ENCODE measurements at regions of chr4 and their contacts with region 1.

Region 1: DNA sequence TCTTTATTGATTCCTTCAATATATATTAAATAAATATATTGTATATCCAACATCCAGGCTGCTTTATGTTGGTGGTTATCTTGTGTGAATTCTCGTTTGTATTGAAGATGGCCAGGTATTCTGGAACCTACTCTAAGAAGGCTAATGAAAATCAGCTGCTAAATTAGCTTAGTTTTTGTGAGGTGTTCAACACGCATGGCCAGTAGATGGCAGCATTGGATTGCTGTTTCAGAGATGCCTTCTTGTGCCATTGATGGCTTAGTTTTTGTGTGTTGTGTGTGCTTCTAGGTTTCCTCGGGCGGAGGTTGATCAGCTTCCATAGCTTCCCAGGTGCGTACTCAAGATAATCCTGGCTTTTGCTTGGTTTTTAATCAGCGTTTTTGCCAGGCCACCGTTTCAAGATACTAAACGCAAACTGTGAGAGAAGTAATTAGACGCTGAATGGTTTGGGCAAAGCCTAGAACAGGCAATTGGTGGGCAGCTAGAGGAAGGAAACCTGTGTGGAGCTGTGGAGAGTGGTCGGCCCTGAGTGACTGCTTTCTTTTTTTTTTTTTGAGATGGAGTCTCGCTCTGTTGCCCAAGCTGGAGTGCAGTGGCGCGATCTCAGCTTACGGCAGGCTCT is 15.1 kb downstream of the NOCT start:
- DNase-seq: peak; percentile 80
- H3K4me3 Mint-ChIP-seq: no peak overlapping the region
- H3K27ac Mint-ChIP-seq: no peak overlapping the region
- H3K4me1 Mint-ChIP-seq: peaks cover 5% of the 10 kb centered on the region
- H3K27me3 Mint-ChIP-seq: no peaks in the 10 kb centered on the region

Region 2: DNA sequence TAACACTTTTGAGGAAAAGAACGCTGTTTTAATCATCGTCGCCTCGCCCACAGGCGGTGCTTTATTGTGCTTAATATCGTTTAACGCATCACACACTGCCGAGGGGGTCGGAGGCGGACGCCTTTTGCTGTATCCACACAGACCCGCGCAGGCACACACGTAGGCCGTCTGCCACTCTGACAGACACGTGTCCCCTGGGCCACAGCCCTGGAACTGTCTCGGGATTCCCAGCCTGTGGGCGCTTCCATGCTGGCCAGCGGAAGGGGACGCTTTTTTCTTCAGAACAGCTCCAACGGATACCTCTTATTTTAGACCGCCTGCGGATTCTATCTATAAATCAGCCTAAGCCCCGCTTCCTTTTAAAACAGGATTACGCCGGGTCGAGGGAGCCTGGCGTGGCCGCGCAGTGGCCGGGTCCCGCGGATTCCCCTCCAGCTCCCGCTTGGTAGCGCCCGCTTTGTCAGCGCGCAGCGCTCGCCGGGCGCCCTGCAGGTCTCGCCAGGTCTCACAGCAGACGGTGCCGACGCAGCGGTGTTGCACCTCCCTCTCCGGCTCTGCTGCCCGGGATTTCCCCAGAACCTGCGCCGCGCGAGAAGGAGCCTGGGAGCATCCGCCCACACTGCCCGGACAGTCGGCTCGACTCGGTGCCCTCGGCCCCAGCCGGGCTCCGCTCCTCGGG is 15.3 kb before region 1 on chr4 and contains the start of gene NOCT:
- CTCF ChIA-PET with region 1: interaction called, 37 read pairs
- POLR2A ChIA-PET with region 1: interaction called, 7 read pairs
- DNase-seq: peak; percentile 91
- H3K4me3 Mint-ChIP-seq: peak within 1 kb of the TSS; percentile 87
- H3K27ac Mint-ChIP-seq: peak within 1 kb of the TSS; percentile 87
- H3K4me1 Mint-ChIP-seq: peaks cover 33% of the 10 kb centered on the region
- H3K27me3 Mint-ChIP-seq: no peaks in the 10 kb centered on the region
- total RNA-seq, gene NOCT: 4.5 to 5.4 TPM

Region 3: GRCh38 chr4:139042981-139043460 is 12.3 kb after region 1 on chr4:
- CTCF ChIA-PET with region 1: interaction called, 23 read pairs
- POLR2A ChIA-PET with region 1: interaction called, 3 read pairs
- DNase-seq: no peak
- H3K4me3 Mint-ChIP-seq: no peak overlapping the region
- H3K27ac Mint-ChIP-seq: no peak overlapping the region
- H3K4me1 Mint-ChIP-seq: peaks cover 5% of the 10 kb centered on the region
- H3K27me3 Mint-ChIP-seq: no peaks in the 10 kb centered on the region

Region 4: GRCh38 chr4:139050446-139050845 is 19.7 kb after region 1 on chr4:
- CTCF ChIA-PET with region 1: interaction called, 13 read pairs
- POLR2A ChIA-PET with region 1: no interaction called
- DNase-seq: no peak
- H3K4me3 Mint-ChIP-seq: no peak overlapping the region
- H3K27ac Mint-ChIP-seq: no peak overlapping the region
- H3K4me1 Mint-ChIP-seq: peaks cover 3% of the 10 kb centered on the region
- H3K27me3 Mint-ChIP-seq: no peaks in the 10 kb centered on the region

Region 5: DNA sequence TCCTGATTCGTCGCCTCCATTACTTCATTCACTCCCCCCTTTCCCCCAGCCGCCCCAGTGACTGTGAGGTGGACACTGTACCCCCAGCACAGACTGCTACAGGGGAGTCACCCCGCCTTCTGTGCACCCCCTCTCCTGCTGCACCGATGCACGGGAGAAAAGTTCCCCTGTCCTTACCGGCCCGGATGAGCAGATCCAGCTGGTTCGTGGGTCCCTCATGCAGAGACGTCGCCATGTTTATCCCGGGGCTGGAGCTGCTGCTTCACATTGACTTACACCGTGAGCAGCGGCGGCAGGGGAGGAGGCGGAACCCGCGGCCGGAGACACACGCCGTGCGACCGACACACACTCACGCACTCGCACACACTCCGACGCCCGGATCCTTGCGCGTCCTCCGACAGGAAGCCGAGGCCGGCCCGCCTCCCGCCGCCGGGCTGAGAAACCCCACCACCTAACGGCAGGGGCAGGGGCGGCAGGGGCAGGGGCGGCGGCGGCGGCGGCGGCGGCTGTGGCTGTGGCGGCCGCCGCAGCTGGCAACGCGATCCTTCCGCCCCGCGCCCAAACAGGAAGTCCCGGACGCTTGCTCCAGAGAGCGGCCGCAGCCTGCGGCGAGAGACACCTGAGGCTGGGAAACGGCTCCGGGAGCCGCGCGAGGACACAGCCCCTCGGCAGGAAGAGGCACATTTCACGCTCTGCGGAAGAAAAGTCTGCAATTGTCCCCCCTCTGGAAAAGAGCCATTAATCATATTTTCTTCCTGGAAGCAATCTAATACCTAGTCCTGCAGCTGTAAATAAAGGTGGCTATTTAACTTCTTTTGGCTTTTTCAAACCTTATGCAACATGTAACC is 53.5 kb after region 1 on chr4:
- CTCF ChIA-PET with region 1: interaction called, 65 read pairs
- POLR2A ChIA-PET with region 1: interaction called, 9 read pairs
- DNase-seq: peak; percentile 86
- H3K4me3 Mint-ChIP-seq: peak overlapping the region; percentile 80
- H3K27ac Mint-ChIP-seq: peak overlapping the region; percentile 98
- H3K4me1 Mint-ChIP-seq: peaks cover 39% of the 10 kb centered on the region
- H3K27me3 Mint-ChIP-seq: no peaks in the 10 kb centered on the region

Region 6: DNA sequence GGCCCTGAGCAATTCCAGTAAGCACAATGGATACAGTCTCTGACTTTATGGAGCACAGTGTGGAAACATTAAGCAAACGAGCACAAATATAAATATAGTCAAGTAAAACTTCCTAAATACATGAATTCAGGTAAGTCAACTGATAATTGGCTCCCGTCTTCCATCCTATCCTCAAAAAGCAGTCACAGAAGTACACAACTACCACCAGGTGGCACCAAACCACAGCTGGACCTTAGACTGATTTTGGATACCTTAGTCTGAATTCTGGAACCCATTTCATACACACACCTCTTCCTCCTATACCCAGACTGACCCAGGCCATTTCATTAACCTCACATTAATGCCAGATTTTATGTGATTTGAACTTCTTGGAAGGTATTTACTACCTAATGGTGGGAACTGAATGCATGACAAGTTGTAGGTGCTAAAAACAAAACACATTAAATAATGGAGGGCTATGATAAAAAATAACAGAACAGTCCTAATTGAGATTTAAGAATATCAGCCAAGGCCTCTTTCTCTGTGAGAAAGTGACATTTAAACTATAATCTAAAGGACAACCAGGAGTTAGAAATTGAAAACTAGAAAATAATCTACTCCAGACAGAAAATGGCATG is 68.7 kb after region 1 on chr4:
- CTCF ChIA-PET with region 1: interaction called, 21 read pairs
- POLR2A ChIA-PET with region 1: no interaction called
- DNase-seq: peak; percentile 78
- H3K4me3 Mint-ChIP-seq: no peak overlapping the region
- H3K27ac Mint-ChIP-seq: no peak overlapping the region
- H3K4me1 Mint-ChIP-seq: no peaks in the 10 kb centered on the region
- H3K27me3 Mint-ChIP-seq: no peaks in the 10 kb centered on the region

Region 7: GRCh38 chr4:139115226-139115625 is 84.5 kb after region 1 on chr4:
- CTCF ChIA-PET with region 1: no interaction called
- POLR2A ChIA-PET with region 1: no interaction called
- DNase-seq: no peak
- H3K4me3 Mint-ChIP-seq: no peak overlapping the region
- H3K27ac Mint-ChIP-seq: no peak overlapping the region
- H3K4me1 Mint-ChIP-seq: no peaks in the 10 kb centered on the region
- H3K27me3 Mint-ChIP-seq: no peaks in the 10 kb centered on the region

Region 8: GRCh38 chr4:139229534-139230039 is 198.9 kb after region 1 on chr4:
- CTCF ChIA-PET with region 1: interaction called, 21 read pairs
- POLR2A ChIA-PET with region 1: no interaction called
- DNase-seq: no peak
- H3K4me3 Mint-ChIP-seq: no peak overlapping the region
- H3K27ac Mint-ChIP-seq: no peak overlapping the region
- H3K4me1 Mint-ChIP-seq: no peaks in the 10 kb centered on the region
- H3K27me3 Mint-ChIP-seq: no peaks in the 10 kb centered on the region